Heart right ventricle (tissue), 16 donors: ENCODE measurements at regions of chr16 and their contacts with region 1.

Region 1: DNA sequence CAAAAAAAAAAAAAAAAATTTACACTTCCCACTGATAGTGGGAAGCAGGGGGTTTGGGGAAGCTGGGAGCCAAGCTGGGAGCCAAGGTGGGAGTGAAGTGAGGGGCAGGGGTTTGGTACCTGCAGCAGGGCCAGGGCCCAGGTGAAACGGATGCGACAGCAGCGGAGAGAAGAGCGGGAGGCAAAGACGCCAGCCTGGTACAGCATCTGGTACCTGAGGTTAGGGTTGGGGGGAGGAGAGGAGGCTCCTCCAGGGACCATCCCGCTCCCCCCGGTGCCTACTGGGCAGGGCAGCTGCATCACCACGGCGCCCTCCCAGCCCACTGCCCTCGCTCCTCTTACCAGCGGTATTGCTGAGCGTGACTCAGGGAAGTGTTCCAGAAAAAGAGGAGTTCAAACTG is 9.8 kb upstream of the NPIPB7 start:
- DNase-seq: no peak
- ATAC-seq: no peak
- H3K4me3 ChIP-seq: no peak overlapping the region
- H3K27ac ChIP-seq: no peak overlapping the region
- H3K4me1 ChIP-seq: no peaks in the 10 kb centered on the region
- H3K27me3 ChIP-seq: no peaks in the 10 kb centered on the region
- CTCF ChIP-seq: no peak

Region 2: DNA sequence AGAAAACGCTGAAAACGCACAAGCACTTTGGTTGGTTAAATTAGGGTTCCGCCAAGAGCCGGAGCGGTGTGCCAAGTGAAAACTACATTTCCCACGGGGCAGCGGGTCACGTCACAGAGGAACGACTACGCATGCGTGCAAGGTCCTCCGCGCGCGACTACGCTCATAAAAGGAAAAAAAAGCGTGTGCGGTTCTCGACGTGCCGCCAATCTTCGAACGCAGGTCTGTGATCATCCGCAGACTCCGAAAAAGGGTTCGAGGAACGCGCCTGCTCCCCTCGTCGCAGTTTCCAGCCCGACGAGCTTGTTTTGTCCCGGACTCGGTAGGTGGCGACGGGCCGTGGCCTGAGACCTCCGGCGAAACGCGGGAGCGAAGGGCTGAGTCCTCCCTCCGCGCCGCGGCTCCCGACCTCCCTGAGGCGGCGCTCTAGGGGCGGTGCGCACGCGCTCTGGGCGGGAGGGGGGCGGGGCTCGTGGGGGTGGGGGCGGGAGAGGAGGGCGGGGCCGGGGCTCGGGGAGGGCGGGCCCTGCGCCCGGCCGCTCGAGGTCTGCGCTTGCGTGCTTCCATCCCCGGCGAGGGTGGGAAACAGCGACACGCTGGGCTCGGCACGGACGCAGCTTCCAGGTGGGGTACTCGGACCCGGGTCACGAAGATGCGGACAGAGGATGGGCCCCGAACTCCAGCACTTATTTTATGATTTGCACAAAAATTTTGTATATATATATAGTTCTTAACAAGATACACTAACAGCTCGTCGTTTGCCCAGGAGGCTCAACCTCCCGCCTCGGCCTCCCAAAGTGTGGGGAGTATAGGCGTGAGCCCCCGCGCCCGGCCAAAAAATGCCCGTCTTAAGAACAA is 72.0 kb after region 1 on chr16 and contains the start of gene SGF29:
- intact Hi-C with region 1: loop called in 1 of 10 experiments (anchors 5 kb)
- DNase-seq: peak; percentile 92 to 95
- ATAC-seq: peak; percentile 96 to 98 (median 96)
- H3K4me3 ChIP-seq: peak within 1 kb of the TSS; percentile 14 to 86 (median 67)
- H3K27ac ChIP-seq: peak within 1 kb of the TSS; percentile 93 to 98 (median 98)
- H3K4me1 ChIP-seq: peaks cover 4 to 32% (median 11%) of the 10 kb centered on the region in 9 donors
- H3K27me3 ChIP-seq: no peaks in the 10 kb centered on the region
- CTCF ChIP-seq: peak in 8 of 9 donors; percentile 21 to 70 (median 38)
- total RNA-seq, gene SGF29: 11.1 to 20.9 (median 13.6) TPM